ENCODE measurements at regions of chr7 and their contacts with region 1.

Region 1: GRCh38 chr7:140696680-140697446 is at the start of gene NDUFB2:
- DNase-seq: peak; percentile 60 to 91
- H3K4me3 ChIP-seq: peak within 1 kb of the TSS; percentile 96
- H3K27ac ChIP-seq: peak within 1 kb of the TSS; percentile 53
- H3K4me1 ChIP-seq: peaks cover 15% of the 10 kb centered on the region
- H3K27me3 ChIP-seq: no peaks in the 10 kb centered on the region
- CTCF ChIP-seq: no peak
- total RNA-seq, gene NDUFB2: 180 and 199 TPM in 2 replicates

Region 2: GRCh38 chr7:140517546-140518369 is 179.1 kb before region 1 on chr7:
- CTCF ChIA-PET with region 1: interaction called, 13 read pairs
- POLR2A ChIA-PET with region 1: no interaction called
- intact Hi-C with region 1: loop called (anchors 1 kb)
- DNase-seq: peak; percentile 78 to 92
- H3K4me3 ChIP-seq: no peak overlapping the region
- H3K27ac ChIP-seq: no peak overlapping the region
- H3K4me1 ChIP-seq: peaks cover 11% of the 10 kb centered on the region
- H3K27me3 ChIP-seq: no peaks in the 10 kb centered on the region
- CTCF ChIP-seq: peak; percentile 96

Region 3: DNA sequence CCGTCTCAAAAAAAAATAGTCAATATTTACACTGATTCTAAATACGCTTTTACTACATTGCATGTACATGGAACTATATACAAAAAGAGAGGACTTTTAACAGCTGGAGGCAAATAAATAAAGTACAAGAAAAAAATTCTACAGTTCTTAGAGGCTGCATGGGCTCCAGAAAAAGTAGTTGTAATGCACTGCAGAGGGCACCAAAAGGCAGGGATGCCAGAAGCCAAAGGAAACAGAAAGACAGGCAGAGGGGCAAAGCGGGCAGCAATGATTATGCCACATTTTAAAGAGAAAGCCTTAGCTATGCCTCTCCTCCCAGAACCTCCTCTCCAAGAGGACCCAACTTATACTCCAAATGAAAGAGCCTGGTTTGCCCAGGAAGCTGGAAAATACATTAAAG is 35.7 kb before region 1 on chr7:
- CTCF ChIA-PET with region 1: no interaction called
- POLR2A ChIA-PET with region 1: no interaction called
- intact Hi-C with region 1: no loop called
- DNase-seq: no peak
- H3K4me3 ChIP-seq: no peak overlapping the region
- H3K27ac ChIP-seq: no peak overlapping the region
- H3K4me1 ChIP-seq: peaks cover 11% of the 10 kb centered on the region
- H3K27me3 ChIP-seq: no peaks in the 10 kb centered on the region
- CTCF ChIP-seq: no peak

Region 4: DNA sequence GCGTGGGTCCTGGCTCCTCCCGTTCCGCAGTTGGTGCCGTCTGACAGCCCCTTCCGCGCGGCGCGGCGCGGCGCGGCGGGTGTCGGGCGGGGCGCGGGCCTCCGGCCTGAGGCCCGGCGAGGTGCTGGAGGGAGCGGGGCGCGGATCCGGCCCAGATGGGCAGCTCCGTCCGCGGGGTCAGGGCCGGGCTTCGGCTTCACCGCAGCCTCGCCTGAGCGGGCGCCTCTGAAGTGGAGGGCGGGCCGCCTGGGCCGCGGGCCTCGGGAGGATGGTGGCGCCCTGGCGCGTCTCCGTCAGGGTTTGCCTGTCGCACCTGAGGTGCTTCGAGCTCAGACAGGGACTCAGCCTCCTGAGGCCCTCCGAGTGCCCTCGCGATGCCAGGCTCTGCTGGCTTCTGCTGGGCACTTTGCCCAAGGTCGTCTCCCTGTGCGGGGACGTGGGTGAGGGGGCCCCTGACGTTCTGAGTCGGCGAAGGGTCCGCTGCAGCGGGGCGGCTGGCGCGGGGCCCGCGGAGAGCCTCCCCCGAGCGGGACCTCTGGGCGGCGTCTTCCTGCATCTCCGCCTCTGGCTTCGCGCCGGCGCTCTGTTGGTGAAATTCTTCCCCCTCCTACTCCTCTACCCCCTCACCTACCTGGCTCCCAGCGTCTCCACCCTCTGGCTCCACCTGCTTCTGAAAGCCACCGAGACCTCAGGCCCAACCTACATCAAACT is 23.6 kb before region 1 on chr7:
- CTCF ChIA-PET with region 1: interaction called, 4 read pairs
- POLR2A ChIA-PET with region 1: no interaction called
- intact Hi-C with region 1: loop called (anchors 2 kb)
- DNase-seq: peak; percentile 56 to 77
- H3K4me3 ChIP-seq: peak overlapping the region; percentile 79
- H3K27ac ChIP-seq: peak overlapping the region; percentile 26; the same call in 1 of the 2 replicates
- H3K4me1 ChIP-seq: peaks cover 31% of the 10 kb centered on the region
- H3K27me3 ChIP-seq: no peaks in the 10 kb centered on the region
- CTCF ChIP-seq: no peak; the same call in 1 of the 2 replicates

Region 5: GRCh38 chr7:140746751-140747150 is 49.9 kb after region 1 on chr7:
- CTCF ChIA-PET with region 1: no interaction called
- POLR2A ChIA-PET with region 1: interaction called, 16 read pairs
- intact Hi-C with region 1: no loop called
- DNase-seq: no peak
- H3K4me3 ChIP-seq: no peak overlapping the region
- H3K27ac ChIP-seq: no peak overlapping the region
- H3K4me1 ChIP-seq: no peaks in the 10 kb centered on the region
- H3K27me3 ChIP-seq: no peaks in the 10 kb centered on the region
- CTCF ChIP-seq: no peak

Region 6: DNA sequence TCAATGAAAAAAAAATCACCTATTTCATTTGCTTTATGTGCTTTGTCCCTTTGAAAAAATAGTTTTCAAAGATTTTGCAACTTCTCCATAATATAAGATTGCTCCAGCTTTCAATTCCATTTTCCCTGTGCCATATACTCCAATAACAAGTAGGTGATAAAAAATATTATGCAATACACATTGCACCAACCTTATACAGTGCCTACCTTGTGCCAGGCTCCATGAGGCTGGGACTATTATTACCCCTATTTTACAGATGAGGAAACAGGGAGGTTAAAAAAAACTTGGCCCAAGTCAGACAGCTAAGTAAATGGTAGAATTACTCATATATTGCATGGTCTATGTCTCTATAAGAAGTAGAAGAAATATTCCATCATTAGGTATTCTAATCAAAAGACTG is 170.1 kb after region 1 on chr7:
- CTCF ChIA-PET with region 1: no interaction called
- POLR2A ChIA-PET with region 1: interaction called, 32 read pairs
- intact Hi-C with region 1: no loop called
- DNase-seq: no peak
- H3K4me3 ChIP-seq: no peak overlapping the region
- H3K27ac ChIP-seq: no peak overlapping the region
- H3K4me1 ChIP-seq: no peaks in the 10 kb centered on the region
- H3K27me3 ChIP-seq: no peaks in the 10 kb centered on the region
- CTCF ChIP-seq: no peak

Region 7: DNA sequence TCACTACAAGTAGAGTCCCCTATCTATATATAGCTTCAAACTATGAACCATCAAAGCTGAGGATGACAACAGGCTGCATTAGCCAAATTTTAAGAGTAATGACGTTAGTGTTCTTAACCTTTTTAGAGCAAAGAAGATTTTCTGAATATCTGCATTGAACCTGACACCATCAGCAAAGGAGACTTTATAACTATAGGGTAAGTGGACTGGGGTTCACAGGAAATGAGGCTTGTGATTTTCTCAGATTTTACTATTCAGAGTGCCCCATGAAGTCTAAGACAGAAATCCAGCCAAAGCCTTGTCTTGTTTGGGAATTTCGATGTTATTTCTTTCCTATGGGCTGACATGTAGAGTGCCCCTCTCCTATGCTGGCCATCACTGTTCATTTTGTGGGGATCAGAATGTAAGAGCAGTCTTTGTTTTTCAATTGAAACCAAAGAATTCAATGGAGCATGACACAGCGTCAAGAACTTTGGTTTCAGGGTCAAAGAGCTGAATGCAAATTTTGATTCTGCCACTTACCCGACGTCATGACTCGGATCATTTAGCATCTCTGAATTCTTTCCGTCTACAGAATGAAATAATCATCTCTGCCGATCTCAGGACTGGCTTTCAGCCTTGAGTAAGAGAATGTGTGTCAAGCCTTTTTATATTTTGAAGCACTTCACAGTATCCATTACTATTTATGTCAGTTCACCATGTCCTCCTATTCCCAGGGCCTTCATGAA is 952.4 kb after region 1 on chr7:
- CTCF ChIA-PET with region 1: interaction called, 9 read pairs
- POLR2A ChIA-PET with region 1: interaction called, 24 read pairs
- intact Hi-C with region 1: no loop called
- DNase-seq: no peak
- H3K4me3 ChIP-seq: no peak overlapping the region
- H3K27ac ChIP-seq: no peak overlapping the region
- H3K4me1 ChIP-seq: peaks cover 6% of the 10 kb centered on the region
- H3K27me3 ChIP-seq: no peaks in the 10 kb centered on the region
- CTCF ChIP-seq: no peak